ENCODE measurements at regions of chr11 and their contacts with region 1.

Region 1: GRCh38 chr11:77047007-77047927 is 13.1 kb downstream of the B3GNT6 start:
- DNase-seq: peak; percentile 89
- H3K4me3 ChIP-seq: peak overlapping the region; percentile 39 to 55 (median 40)
- H3K27ac ChIP-seq: peak overlapping the region; percentile 57
- H3K4me1 ChIP-seq: peaks cover 12% of the 10 kb centered on the region
- H3K27me3 ChIP-seq: no peaks in the 10 kb centered on the region
- CTCF ChIP-seq: peak; percentile 62 to 63

Region 2: DNA sequence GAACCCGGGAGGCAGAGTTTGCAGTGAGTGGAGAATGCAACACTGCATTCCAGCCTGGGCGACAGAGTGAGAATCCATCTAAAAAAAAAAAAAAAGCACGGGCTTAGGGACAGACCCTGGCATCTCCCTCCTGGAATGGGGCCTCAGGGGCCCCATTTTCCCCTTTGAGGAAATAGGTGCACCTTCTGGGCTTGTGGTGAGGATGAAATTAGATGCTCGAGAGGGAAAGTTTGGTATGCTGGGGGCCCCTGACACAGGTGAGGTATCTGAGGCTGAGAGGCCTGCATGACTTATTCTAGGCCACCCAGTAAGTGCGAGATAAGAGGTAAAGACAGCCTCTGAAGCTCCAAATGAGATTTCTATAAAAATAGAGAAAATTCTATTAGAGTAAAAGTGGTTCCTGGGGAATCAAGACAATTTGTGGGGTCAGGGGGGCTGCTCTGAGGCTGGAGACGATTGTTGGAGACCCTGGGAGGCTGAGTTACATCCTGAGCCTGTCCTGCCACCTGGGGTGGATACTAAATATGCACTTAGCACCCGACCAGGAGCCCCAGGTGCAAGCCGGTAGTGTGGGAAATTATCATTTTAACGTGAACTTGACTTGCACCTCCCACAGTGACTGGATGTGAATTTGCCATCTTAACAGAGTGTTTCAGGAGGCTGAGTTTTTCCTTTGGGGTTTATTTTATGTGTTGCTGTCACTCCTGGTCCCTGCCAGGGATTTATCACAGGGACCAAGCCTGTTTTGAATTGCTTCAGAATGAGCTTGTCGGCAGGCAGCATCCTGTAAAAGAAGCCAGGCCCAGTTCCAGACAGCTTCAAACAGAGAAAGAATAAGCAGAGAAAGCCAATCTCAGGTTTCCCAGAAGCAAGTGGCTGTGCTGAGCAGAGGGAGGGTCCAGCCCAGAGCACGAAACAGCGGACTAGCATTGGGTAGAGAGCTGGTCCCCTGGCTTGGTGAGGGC is 312.5 kb before region 1 on chr11:
- CTCF ChIA-PET with region 1: interaction called, 3 read pairs
- dilution Hi-C with region 1: no loop called
- in situ Hi-C with region 1: loop called in 1 of 2 experiments (anchors 25 kb)
- intact Hi-C with region 1: loop called (anchors 2 kb)
- DNase-seq: no peak
- H3K4me3 ChIP-seq: no peak overlapping the region
- H3K27ac ChIP-seq: no peak overlapping the region
- H3K4me1 ChIP-seq: no peaks in the 10 kb centered on the region
- H3K27me3 ChIP-seq: no peaks in the 10 kb centered on the region
- CTCF ChIP-seq: no peak

Region 3: DNA sequence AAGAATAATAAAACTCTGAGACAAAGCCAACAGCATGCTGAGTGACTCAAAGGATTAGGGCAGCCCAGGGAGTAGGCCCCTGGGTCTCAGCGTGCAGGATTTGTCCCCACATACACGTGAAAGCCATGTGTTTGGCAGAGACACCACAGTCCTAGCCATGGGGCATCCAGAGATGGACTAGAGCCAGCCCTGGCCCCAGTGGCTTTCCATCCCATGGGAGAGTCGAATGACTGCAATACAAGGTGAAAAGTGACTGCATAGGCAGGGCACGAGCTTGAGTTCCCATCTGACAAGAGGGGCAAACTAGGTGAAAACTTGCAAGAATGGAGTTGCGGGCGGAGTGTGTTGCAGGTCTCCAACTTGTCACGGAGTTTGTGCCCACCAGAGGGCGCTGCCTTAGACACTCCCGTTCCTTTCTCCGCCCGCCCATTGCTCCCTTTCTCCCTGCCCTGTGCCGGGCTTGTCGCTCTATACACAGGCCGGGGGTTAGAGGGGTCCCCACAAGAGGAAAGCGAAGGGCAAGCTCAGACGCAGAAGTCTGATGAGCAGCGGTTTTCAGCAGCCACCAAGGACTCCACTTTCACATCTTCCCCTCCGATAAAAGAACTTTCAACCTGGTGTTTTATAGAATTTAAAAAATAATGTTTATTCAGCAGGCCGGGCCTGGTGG is 239.9 kb before region 1 on chr11:
- CTCF ChIA-PET with region 1: no interaction called
- dilution Hi-C with region 1: no loop called
- in situ Hi-C with region 1: loop called in 1 of 2 experiments (anchors 10 kb)
- intact Hi-C with region 1: loop called (anchors 2 kb)
- DNase-seq: peak; percentile 46
- H3K4me3 ChIP-seq: peak overlapping the region in 1 of 3 experiments; percentile 7
- H3K27ac ChIP-seq: no peak overlapping the region
- H3K4me1 ChIP-seq: peaks cover 13% of the 10 kb centered on the region
- H3K27me3 ChIP-seq: no peaks in the 10 kb centered on the region
- CTCF ChIP-seq: peak; percentile 73 to 77

Region 4: DNA sequence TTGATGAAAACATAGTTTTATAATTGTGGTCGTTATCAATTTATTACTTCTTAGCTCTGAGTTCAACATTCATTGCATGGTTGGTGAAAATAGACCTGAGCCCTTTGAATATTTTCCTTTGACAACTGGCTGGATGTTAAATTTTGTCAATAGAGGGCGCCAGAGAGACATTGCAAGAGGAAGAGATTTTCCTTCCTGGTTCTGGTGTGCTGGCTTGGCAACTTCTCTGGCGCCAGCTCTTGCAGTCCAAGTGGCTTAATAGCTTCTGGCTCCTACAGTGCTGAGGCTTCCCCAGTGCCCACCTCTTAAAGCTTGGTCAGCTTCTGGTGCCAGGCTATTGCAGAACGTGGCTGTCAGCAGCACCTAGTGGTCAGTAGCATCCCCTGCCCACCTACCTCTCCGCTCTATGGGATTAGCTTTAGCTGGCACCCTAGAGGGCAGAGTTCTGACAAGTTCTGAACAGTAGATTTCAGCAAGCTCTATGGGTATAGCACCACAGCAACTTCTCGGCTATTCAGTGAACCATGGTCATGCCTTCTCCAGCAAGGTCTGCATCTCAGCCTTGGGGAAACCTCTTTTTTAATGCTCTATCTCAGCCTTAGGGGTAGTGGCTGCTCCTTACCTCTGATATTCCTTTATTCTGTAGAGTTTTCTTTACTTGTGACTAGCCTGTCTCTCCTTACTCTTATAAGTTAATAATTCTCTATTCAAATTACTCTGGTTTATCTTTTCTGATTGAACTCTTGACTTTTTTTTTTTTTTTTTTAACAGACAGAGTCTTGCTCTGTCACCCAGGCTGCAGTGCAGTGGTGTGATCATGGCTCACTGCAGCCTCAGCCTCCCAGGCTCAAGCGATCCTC is 127.2 kb before region 1 on chr11:
- CTCF ChIA-PET with region 1: interaction called, 4 read pairs
- dilution Hi-C with region 1: no loop called
- in situ Hi-C with region 1: no loop called
- intact Hi-C with region 1: loop called (anchors 1 kb)
- DNase-seq: peak; percentile 64
- H3K4me3 ChIP-seq: peak overlapping the region in 1 of 3 experiments; percentile 2
- H3K27ac ChIP-seq: no peak overlapping the region
- H3K4me1 ChIP-seq: no peaks in the 10 kb centered on the region
- H3K27me3 ChIP-seq: no peaks in the 10 kb centered on the region
- CTCF ChIP-seq: peak; percentile 89 to 92

Region 5: DNA sequence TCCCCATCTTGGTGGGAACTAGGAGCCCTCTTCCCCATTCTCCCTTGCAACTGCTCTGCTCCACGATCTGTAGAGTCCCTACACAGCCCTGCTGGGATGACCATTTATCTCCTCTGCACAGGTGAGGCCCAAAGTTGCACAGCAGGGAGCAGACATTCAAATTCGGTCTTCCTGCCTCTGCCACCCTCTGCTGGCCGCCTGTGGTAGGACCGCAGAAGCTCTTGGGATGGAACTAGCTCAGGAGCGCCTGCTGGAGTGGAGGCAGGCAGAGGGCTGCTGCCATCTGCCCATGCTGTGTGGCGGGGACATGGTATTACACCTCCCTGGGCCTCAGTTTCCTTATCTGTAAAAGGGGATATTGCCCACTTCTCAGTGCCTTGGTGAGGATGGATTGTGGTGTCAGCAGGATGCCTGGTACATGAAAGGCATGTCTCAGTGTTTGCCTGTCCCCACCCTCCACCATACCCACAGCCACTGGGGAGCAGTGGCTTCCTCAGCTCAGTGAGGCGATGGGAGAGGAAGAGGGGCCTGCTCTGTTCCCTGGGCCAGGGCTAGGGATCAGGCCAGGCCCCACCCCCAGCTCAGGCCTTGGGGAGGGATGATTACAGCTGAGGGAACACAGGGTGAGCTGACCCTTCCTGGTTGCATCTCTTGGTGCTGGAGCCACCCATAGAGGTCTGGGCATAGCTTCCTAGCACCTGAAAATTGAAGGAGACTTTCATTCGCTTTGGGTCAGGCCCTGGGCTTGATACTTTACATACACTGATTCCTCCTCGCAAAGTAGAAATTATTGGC is 44.1 kb after region 1 on chr11:
- CTCF ChIA-PET with region 1: interaction called, 67 read pairs
- dilution Hi-C with region 1: loop called (anchors 5 kb)
- in situ Hi-C with region 1: no loop called
- intact Hi-C with region 1: loop called (anchors 1 kb)
- DNase-seq: peak; percentile 64
- H3K4me3 ChIP-seq: no peak overlapping the region
- H3K27ac ChIP-seq: no peak overlapping the region
- H3K4me1 ChIP-seq: no peaks in the 10 kb centered on the region
- H3K27me3 ChIP-seq: no peaks in the 10 kb centered on the region
- CTCF ChIP-seq: peak; percentile 96 to 98

Region 6: DNA sequence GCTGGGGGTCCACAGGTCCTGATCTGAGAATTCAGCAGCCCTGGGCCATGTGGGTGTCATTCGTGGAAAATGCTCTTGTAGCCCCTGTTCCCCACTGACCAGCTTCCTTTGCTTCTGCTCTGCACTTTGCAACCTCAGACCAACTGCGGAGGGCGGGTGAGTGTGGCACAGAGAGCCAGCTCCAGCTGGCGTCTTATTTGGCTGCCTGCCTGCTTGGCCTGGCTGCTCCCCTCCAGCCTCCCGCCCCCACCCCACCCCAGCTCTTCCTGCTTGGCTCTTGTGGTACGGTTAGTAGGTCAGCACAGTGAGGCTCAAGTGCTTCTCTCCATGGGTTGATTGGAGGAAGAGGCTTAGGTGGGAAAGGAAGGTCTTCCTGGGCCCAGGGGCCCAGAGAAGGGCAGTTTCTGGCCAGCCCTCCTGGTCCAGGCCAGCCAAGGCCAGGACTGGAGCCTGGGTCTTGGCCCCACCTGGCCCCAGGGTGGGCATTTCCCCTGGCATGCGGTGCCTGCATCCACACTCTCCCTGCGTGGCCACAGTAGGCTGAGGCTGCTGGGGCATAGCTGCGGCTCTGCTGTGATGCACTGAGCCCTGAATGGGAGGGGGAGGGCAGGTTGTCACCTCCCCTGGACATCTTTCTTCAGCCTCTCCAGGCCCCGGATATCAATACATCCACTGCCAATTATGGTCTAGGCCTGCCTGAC is 107.3 kb after region 1 on chr11:
- CTCF ChIA-PET with region 1: no interaction called
- dilution Hi-C with region 1: no loop called
- in situ Hi-C with region 1: no loop called
- intact Hi-C with region 1: no loop called
- DNase-seq: no peak
- H3K4me3 ChIP-seq: no peak overlapping the region
- H3K27ac ChIP-seq: no peak overlapping the region
- H3K4me1 ChIP-seq: peaks cover 7% of the 10 kb centered on the region
- H3K27me3 ChIP-seq: peaks cover 14% of the 10 kb centered on the region
- CTCF ChIP-seq: no peak

Region 7: DNA sequence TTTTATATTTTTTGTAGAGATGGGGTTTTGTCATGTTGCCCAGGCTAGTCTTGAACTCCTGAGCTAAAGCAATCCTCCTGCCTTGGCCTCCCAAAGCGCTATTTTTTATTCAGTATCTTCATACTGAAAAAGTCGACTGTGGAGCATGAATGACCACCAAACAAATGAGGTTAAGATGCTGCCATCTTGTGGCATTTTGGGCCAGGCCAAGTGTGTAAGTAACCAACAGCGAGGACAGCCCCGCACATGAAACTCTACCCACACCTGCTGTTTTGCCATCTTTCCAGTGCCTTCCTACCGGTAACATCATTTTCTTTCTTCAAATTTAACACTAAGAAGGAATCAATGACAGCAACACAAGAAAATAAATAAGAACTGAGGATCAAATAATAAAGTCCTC is 510.3 kb after region 1 on chr11:
- CTCF ChIA-PET with region 1: interaction called, 6 read pairs
- dilution Hi-C with region 1: no loop called
- in situ Hi-C with region 1: no loop called
- intact Hi-C with region 1: loop called (anchors 5 kb)
- DNase-seq: no peak
- H3K4me3 ChIP-seq: no peak overlapping the region
- H3K27ac ChIP-seq: no peak overlapping the region
- H3K4me1 ChIP-seq: peaks cover 20% of the 10 kb centered on the region
- H3K27me3 ChIP-seq: no peaks in the 10 kb centered on the region
- CTCF ChIP-seq: peak; percentile 16 to 18

Measured in mammary epithelial cell (primary cell).